AG04449 (cell line): ENCODE measurements at regions of chr12 and their contacts with region 1.

Region 1: GRCh38 chr12:19739183-19739776 is 300.0 kb downstream of the AEBP2 start:
- DNase-seq: no peak
- H3K4me3 ChIP-seq: no peak overlapping the region
- CTCF ChIP-seq: peak; percentile 28

Region 2: GRCh38 chr12:19726122-19726521 is 13.2 kb before region 1 on chr12:
- CTCF ChIA-PET with region 1: interaction called, 29 read pairs
- POLR2A ChIA-PET with region 1: no interaction called
- DNase-seq: no peak
- H3K4me3 ChIP-seq: no peak overlapping the region
- CTCF ChIP-seq: no peak

Region 3: GRCh38 chr12:19757317-19757877 is 18.1 kb after region 1 on chr12:
- CTCF ChIA-PET with region 1: interaction called, 42 read pairs
- POLR2A ChIA-PET with region 1: no interaction called
- DNase-seq: no peak
- H3K4me3 ChIP-seq: no peak overlapping the region
- CTCF ChIP-seq: peak; percentile 56

Region 4: DNA sequence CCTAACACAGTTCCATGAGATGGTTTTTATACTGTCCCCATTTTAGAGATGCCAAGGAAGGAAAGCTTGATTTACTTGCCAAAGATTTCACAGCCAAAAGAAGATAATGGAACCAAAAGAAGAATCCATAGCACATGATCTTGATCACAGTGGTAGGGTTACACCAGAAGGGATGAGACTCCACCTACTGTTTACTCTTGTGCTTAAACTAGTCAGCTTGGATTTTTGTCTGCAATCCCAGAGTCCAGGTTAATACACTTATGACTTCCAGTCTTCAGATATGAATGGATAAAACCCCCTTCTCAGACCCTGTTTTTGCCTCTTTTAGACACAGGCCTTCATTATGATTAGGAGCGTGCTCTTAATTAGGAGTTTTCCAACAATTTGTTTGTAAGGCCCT is 154.2 kb after region 1 on chr12:
- CTCF ChIA-PET with region 1: interaction called, 20 read pairs
- POLR2A ChIA-PET with region 1: no interaction called
- DNase-seq: no peak
- H3K4me3 ChIP-seq: no peak overlapping the region
- CTCF ChIP-seq: peak; percentile 33

Region 5: GRCh38 chr12:19915392-19916195 is 176.3 kb after region 1 on chr12:
- CTCF ChIA-PET with region 1: interaction called, 26 read pairs
- POLR2A ChIA-PET with region 1: no interaction called
- DNase-seq: no peak
- H3K4me3 ChIP-seq: no peak overlapping the region
- CTCF ChIP-seq: peak; percentile 44

Region 6: DNA sequence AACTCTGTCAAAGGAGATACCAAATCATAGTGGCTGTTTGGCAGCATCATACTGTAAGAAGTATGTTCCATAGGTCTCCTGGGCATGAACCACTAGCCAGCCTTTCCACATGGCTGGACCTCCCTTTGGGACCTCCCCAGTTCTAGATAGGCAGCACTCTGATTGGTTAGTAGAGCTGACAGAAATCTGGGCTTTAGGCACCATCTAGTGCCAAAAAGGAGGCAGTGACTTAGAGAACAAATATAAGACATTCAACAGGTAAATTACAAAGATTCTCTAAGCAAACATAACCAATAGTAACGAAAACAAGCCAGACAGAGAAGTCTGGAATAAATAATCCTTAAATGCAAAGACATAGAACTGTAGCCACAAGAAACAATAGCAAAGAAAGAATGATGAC is 481.1 kb after region 1 on chr12:
- CTCF ChIA-PET with region 1: interaction called, 11 read pairs
- POLR2A ChIA-PET with region 1: no interaction called
- DNase-seq: no peak
- H3K4me3 ChIP-seq: no peak overlapping the region
- CTCF ChIP-seq: peak; percentile 2

Region 7: GRCh38 chr12:20376984-20377383 is 637.7 kb after region 1 on chr12:
- CTCF ChIA-PET with region 1: interaction called, 17 read pairs
- POLR2A ChIA-PET with region 1: no interaction called
- DNase-seq: no peak
- H3K4me3 ChIP-seq: no peak overlapping the region
- CTCF ChIP-seq: peak; percentile 15